ENCODE measurements at regions of chr4 and their contacts with region 1.

Region 1: DNA sequence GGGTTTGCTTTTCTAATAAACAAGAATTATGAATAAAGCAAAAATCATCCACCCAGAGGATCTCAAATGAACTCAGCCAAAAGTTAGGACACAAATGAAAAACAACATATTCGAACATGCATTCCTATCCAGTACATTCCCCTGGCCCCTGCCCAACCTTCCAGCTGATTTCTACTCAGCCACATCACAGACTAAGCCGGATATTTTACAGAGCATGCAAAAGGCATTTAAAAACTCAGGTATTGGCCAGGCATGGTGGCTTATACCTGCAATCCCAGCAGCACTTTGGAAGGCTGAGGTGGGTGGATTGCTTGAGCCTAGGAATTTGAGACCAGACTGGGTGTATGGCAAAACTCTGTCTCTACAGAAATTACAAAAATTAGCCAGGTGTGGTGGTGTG is 54.6 kb downstream of the RELL1 start:
- DNase-seq: no peak
- H3K4me3 ChIP-seq: no peak overlapping the region
- H3K27ac ChIP-seq: no peak overlapping the region
- H3K4me1 ChIP-seq: peaks cover 14% of the 10 kb centered on the region
- H3K27me3 ChIP-seq: no peaks in the 10 kb centered on the region
- CTCF ChIP-seq: no peak

Region 2: DNA sequence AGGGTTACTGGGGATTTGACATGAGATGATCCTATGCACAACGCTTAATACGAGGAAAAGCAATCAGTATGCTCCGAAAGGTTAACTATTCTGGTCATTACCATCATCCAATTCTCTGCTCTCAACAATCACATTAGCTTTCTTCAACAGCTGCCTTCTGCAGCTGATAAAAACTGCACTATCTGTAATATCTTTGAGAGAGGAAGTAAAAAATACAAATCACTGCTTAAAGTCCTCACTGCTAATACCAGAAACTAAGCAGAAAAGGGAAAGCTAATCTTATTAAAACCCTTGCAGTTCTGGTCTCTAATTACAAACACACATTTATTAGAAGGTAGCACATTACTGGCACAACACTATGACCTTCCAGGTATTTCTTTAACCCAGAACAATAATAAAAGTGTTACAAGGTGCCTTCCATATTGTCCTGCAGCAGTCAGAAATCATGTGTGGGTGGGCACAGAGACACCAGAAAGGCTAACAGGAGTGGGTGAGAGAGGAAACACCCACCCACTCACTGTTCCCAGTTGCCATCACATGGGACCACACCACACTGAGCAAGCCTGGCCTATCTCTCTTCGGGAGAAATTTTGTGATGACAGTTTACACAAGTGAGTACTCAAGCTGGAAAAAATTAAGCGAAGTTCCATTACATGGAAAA is 16.4 kb before region 1 on chr4:
- CTCF ChIA-PET with region 1: interaction called, 13 read pairs
- POLR2A ChIA-PET with region 1: no interaction called
- intact Hi-C with region 1: no loop called
- DNase-seq: no peak
- H3K4me3 ChIP-seq: no peak overlapping the region
- H3K27ac ChIP-seq: no peak overlapping the region
- H3K4me1 ChIP-seq: no peaks in the 10 kb centered on the region
- H3K27me3 ChIP-seq: no peaks in the 10 kb centered on the region
- CTCF ChIP-seq: no peak